ENCODE measurements at regions of chr3 and their contacts with region 1.

Region 1: GRCh38 chr3:124995460-124995994 is 60.3 kb downstream of the HEG1 start:
- DNase-seq: peak; percentile 43 to 64
- H3K4me3 ChIP-seq: no peak overlapping the region
- H3K27ac ChIP-seq: peak overlapping the region in 1 of 2 donors; percentile 16
- H3K4me1 ChIP-seq: no peaks in the 10 kb centered on the region
- H3K27me3 ChIP-seq: no peaks in the 10 kb centered on the region
- CTCF ChIP-seq: peak; percentile 69 to 76 (median 72)
- POLR2A ChIP-seq: no peak

Region 2: GRCh38 chr3:124174476-124174875 is 821.1 kb before region 1 on chr3:
- intact Hi-C with region 1: no loop called
- DNase-seq: peak; percentile 25 to 47
- H3K4me3 ChIP-seq: no peak overlapping the region
- H3K27ac ChIP-seq: peak overlapping the region; percentile 0 to 50
- H3K4me1 ChIP-seq: peaks cover 0 to 7% of the 10 kb centered on the region in 2 donors
- H3K27me3 ChIP-seq: no peaks in the 10 kb centered on the region
- CTCF ChIP-seq: no peak
- POLR2A ChIP-seq: no peak

Region 3: GRCh38 chr3:125437631-125438435 is 442.3 kb after region 1 on chr3:
- intact Hi-C with region 1: loop called (anchors 10 kb)
- DNase-seq: peak; percentile 48 to 62
- H3K4me3 ChIP-seq: no peak overlapping the region
- H3K27ac ChIP-seq: no peak overlapping the region
- H3K4me1 ChIP-seq: no peaks in the 10 kb centered on the region
- H3K27me3 ChIP-seq: no peaks in the 10 kb centered on the region
- CTCF ChIP-seq: peak; percentile 78 to 92 (median 85)
- POLR2A ChIP-seq: no peak